ENCODE measurements at regions of chr10 and their contacts with region 1.

Region 1: DNA sequence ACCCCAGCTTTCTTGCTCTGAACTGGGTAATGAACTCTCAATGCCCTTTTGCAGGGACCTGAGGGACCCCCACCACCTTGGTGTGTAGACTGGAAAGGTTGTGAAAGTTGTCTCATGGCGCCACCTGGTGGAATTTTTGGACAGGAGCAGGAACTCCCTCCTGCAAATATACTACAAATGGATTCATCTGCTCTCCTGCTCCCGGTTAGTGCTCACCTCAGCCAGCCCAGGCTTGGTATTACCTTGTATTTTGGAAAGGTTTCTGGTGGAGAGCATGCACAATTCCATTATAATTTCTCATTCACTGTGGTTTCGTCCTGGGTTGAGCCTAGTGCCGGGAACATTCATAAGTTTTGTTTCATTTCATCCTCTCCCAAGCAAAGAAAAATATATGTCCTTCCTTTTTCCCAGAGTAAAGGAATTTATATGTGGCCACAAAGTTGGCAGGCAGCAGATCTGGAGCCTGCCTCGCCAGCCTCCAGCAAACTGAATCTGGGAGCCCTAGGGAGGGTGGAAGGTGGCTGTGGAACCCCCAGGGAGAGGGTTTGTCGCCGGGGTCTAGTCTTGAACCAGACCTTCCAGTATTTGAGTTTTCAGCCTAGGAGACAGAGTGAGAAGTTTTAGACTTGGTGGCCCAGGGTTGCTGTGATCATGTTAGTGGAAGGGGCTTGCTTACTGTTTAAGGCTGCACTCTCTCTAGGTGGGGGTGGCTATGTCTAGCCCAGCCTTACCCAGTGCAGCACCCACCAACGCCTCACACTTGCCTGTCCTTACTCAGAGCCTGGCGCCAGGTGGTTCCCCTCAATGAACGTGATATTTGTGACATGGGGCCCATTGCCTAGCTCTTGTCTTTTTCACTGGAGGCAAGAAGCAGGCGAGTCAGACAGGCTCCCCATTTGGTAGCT is 9.5 kb downstream of the FAM241B start:
- DNase-seq: peak; percentile 72 to 91
- H3K4me3 ChIP-seq: no peak overlapping the region
- H3K27ac ChIP-seq: no peak overlapping the region
- H3K4me1 ChIP-seq: peaks cover 0 to under 1% (median 0%) of the 10 kb centered on the region in 4 donors
- H3K27me3 ChIP-seq: peaks cover 0 to 22% (median 8%) of the 10 kb centered on the region in 3 donors
- CTCF ChIP-seq: peak in 5 of 7 experiments; percentile 71 to 88 (median 72)
- EP300 ChIP-seq: no peak
- POLR2A ChIP-seq: no peak

Region 2: GRCh38 chr10:69439813-69440506 is 199.6 kb before region 1 on chr10:
- intact Hi-C with region 1: loop called (anchors 10 kb)
- DNase-seq: peak; percentile 64 to 85
- H3K4me3 ChIP-seq: no peak overlapping the region
- H3K27ac ChIP-seq: peak overlapping the region in 4 of 5 donors; percentile 69 to 90 (median 84)
- H3K4me1 ChIP-seq: peaks cover 21 to 36% (median 23%) of the 10 kb centered on the region in 4 donors
- H3K27me3 ChIP-seq: no peaks in the 10 kb centered on the region
- CTCF ChIP-seq: no peak
- EP300 ChIP-seq: no peak
- POLR2A ChIP-seq: no peak

Region 3: GRCh38 chr10:69515699-69516259 is 123.8 kb before region 1 on chr10:
- intact Hi-C with region 1: loop called (anchors 10 kb)
- DNase-seq: peak; percentile 79 to 89
- H3K4me3 ChIP-seq: no peak overlapping the region
- H3K27ac ChIP-seq: no peak overlapping the region
- H3K4me1 ChIP-seq: no peaks in the 10 kb centered on the region
- H3K27me3 ChIP-seq: peaks cover 0 to 3% (median 0%) of the 10 kb centered on the region in 3 donors
- CTCF ChIP-seq: peak in 5 of 7 experiments; percentile 54 to 68 (median 64)
- EP300 ChIP-seq: no peak
- POLR2A ChIP-seq: no peak

Region 4: DNA sequence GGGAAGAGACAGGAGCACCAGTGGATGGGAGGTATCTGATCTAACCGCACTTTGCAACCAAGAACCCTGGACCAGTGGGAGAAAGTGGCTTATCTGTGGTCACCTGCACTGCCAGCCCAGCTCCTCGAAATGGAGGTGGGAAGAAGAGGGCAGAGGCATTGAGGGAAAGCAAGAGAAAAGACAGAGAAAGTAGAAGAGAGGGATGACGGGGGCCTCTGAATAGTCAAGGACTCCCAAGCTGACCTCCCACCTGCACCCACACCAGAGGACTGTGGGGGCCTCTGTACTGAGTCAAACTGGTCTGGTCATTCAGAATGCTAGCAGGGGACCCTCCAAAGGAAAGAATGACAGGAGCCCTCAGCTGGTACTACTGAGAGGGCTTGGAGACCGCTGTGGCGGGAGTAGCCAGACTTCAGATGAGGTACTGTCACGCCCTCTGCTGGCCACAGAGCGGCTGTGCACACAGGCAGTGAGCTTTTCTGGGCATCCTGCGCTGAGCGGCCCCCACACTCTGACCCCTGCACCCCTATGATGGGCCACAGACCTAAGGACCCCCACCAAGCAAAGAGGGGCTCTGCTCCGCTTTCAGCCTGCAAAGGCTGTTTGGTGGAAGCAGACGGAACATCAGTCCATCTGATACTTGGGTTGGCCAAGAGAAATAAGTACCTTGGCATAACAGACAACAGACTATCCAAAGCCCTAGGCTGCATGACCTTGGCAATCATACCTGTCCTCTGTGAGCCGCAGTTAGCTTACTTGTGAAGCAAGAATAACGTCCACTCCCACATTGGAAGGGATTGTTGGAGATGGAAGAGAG is 275.1 kb after region 1 on chr10:
- intact Hi-C with region 1: loop called (anchors 10 kb)
- DNase-seq: peak; percentile 77 to 89
- H3K4me3 ChIP-seq: no peak overlapping the region
- H3K27ac ChIP-seq: no peak overlapping the region
- H3K4me1 ChIP-seq: peaks cover 16 to 49% (median 35%) of the 10 kb centered on the region in 4 donors
- H3K27me3 ChIP-seq: peaks cover 0 to 12% (median 0%) of the 10 kb centered on the region in 3 donors
- CTCF ChIP-seq: peak in 6 of 7 experiments; percentile 42 to 98 (median 92)
- EP300 ChIP-seq: no peak
- POLR2A ChIP-seq: no peak